CD4-positive, alpha-beta T cell (primary cell): ENCODE measurements at regions of chr6 and their contacts with region 1.

Region 1: GRCh38 chr6:79949233-79949632 is 1.9 kb upstream of the ELOVL4 start:
- DNase-seq: peak in 12 of 14 experiments; percentile 4 to 87 (median 32)
- ATAC-seq: peak; percentile 38
- H3K4me3 ChIP-seq: no peak overlapping the region
- H3K4me3 Mint-ChIP-seq: peak overlapping the region; percentile 68
- H3K27ac ChIP-seq: no peak overlapping the region
- H3K27ac Mint-ChIP-seq: no peak overlapping the region
- H3K4me1 ChIP-seq: peaks cover 25% of the 10 kb centered on the region
- H3K4me1 Mint-ChIP-seq: peaks cover 29% of the 10 kb centered on the region
- H3K27me3 ChIP-seq: peaks cover 7 to 31% of the 10 kb centered on the region in 2 experiments
- H3K27me3 Mint-ChIP-seq: peaks cover 23% of the 10 kb centered on the region
- CTCF ChIP-seq: peak; percentile 81

Region 2: GRCh38 chr6:80094017-80094416 is 144.8 kb after region 1 on chr6:
- CTCF ChIA-PET with region 1: interaction called, 13 read pairs
- POLR2A ChIA-PET with region 1: no interaction called
- intact Hi-C with region 1: loop called (anchors 1 kb)
- DNase-seq: peak in 4 of 14 experiments; percentile 20 to 52 (median 48)
- ATAC-seq: no peak
- H3K4me3 ChIP-seq: no peak overlapping the region
- H3K4me3 Mint-ChIP-seq: no peak overlapping the region
- H3K27ac ChIP-seq: no peak overlapping the region
- H3K27ac Mint-ChIP-seq: no peak overlapping the region
- H3K4me1 ChIP-seq: no peaks in the 10 kb centered on the region
- H3K4me1 Mint-ChIP-seq: no peaks in the 10 kb centered on the region
- H3K27me3 ChIP-seq: no peaks in the 10 kb centered on the region
- H3K27me3 Mint-ChIP-seq: no peaks in the 10 kb centered on the region
- CTCF ChIP-seq: peak; percentile 78